Caco-2 (cell line): ENCODE measurements at regions of chr14 and their contacts with region 1.

Region 1: DNA sequence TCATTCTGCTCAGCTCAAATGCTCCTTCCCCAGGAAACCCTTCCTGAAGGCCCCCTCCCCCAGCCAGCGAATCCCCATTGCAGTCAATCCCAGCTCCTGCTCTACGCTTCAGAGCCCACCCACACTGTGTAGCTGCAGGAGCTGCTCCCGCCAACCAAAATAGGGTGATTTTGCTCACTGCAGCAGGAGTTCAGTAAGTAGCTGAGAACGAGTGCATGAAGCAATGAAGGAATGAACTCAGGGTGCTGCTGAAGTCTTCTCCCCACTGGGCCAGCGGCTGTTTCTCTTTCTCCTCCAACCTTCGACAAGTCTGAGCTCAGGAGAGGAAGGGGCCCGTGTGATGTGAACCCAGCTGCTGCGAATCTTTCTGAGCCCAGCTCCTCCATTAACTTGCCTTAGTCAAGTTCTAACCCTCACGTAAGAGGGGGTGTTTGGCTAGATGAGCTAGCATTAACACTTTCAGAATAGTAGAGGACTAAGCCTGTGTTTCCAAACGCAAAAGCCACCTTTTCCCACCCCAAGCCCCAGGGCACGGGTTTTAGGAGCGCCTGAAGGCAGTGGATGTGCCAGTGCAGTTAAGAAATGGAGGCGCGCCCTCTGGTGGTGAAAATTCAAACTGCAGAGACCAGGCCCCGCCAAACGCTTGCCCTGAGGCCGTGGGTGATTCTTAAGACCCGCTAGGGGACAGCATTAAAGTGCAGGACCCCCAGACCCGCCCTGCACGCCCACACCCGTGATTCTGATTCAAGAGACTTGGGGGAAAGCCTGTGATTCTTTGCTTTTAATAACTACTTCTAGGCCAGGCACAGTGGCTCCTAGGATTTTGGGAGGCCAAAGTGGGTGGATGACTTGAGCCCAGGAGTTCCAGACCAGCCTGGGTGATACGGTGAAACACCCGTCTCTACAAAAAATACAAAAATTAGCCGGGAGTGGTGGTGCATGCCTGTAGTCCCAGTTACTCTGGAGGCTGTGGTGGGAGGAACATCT is 11.9 kb upstream of the SERPINA4 start:
- DNase-seq: peak; percentile 58 to 73
- H3K4me3 ChIP-seq: no peak overlapping the region
- H3K4me3 Mint-ChIP-seq: no peak overlapping the region
- H3K27ac Mint-ChIP-seq: no peak overlapping the region
- H3K4me1 ChIP-seq: no peaks in the 10 kb centered on the region
- H3K4me1 Mint-ChIP-seq: no peaks in the 10 kb centered on the region
- H3K27me3 ChIP-seq: no peaks in the 10 kb centered on the region
- H3K27me3 Mint-ChIP-seq: peaks cover 3% of the 10 kb centered on the region
- CTCF ChIP-seq: peak; percentile 79 to 88

Region 2: GRCh38 chr14:94428610-94429009 is 120.7 kb before region 1 on chr14:
- CTCF ChIA-PET with region 1: interaction called, 13 read pairs
- POLR2A ChIA-PET with region 1: no interaction called
- intact Hi-C with region 1: loop called (anchors 5 kb)
- DNase-seq: no peak
- H3K4me3 ChIP-seq: no peak overlapping the region
- H3K4me3 Mint-ChIP-seq: no peak overlapping the region
- H3K27ac Mint-ChIP-seq: no peak overlapping the region
- H3K4me1 ChIP-seq: no peaks in the 10 kb centered on the region
- H3K4me1 Mint-ChIP-seq: peaks cover under 1% of the 10 kb centered on the region
- H3K27me3 ChIP-seq: no peaks in the 10 kb centered on the region
- H3K27me3 Mint-ChIP-seq: no peaks in the 10 kb centered on the region
- CTCF ChIP-seq: no peak